CD14-positive monocyte (primary cell): ENCODE measurements at regions of chr1 and their contacts with region 1.

Region 1: GRCh38 chr1:157156058-157156541 is 17.9 kb upstream of the ETV3 start:
- DNase-seq: peak; percentile 70 to 84 (median 77)
- H3K4me3 ChIP-seq: no peak overlapping the region
- H3K4me3 Mint-ChIP-seq: peak overlapping the region; percentile 63 to 78
- H3K27ac ChIP-seq: no peak overlapping the region
- H3K27ac Mint-ChIP-seq: peak overlapping the region; percentile 28 to 91 (median 74)
- H3K4me1 ChIP-seq: peaks cover 23 to 25% of the 10 kb centered on the region in 2 donors
- H3K4me1 Mint-ChIP-seq: peaks cover 27% of the 10 kb centered on the region
- H3K27me3 ChIP-seq: no peaks in the 10 kb centered on the region
- H3K27me3 Mint-ChIP-seq: peaks cover 6 to 19% (median 11%) of the 10 kb centered on the region in 3 donors
- CTCF ChIP-seq: peak; percentile 95

Region 2: GRCh38 chr1:157090196-157090647 is 65.9 kb before region 1 on chr1:
- intact Hi-C with region 1: loop called (anchors 1 kb)
- DNase-seq: peak; percentile 76 to 83 (median 83)
- H3K4me3 ChIP-seq: no peak overlapping the region
- H3K4me3 Mint-ChIP-seq: no peak overlapping the region
- H3K27ac ChIP-seq: no peak overlapping the region
- H3K27ac Mint-ChIP-seq: peak overlapping the region in 1 of 7 donors; percentile 33
- H3K4me1 ChIP-seq: peaks cover 12 to 13% of the 10 kb centered on the region in 2 donors
- H3K4me1 Mint-ChIP-seq: peaks cover 9% of the 10 kb centered on the region
- H3K27me3 ChIP-seq: no peaks in the 10 kb centered on the region
- H3K27me3 Mint-ChIP-seq: peaks cover 2 to 13% (median 3%) of the 10 kb centered on the region in 3 donors
- CTCF ChIP-seq: peak; percentile 93

Region 3: DNA sequence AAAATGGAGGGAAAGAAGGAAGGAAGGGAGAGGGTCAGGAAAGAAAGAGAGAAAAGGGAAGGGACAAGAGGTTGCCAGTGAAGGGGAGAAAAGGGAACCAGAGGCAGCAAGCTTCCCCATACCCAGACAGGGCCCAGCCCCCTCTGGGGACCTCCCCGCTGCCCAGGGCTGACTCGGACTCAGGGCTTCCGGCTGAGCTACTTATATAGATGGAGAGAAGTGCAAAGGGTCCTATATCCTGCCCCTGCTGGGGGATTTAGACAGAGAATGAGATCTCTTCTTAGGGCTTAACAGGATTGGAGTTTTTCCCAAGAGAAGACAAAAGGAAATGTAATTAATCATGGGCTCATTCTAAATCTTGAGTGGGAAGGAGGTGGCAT is 56.5 kb before region 1 on chr1 and contains the start of gene ETV3L:
- intact Hi-C with region 1: loop called in 1 of 2 experiments (anchors 2 kb)
- DNase-seq: peak; percentile 75 to 91 (median 88)
- H3K4me3 ChIP-seq: peak within 1 kb of the TSS in 1 of 3 experiments; percentile 30
- H3K4me3 Mint-ChIP-seq: peak within 1 kb of the TSS in 1 of 2 donors; percentile 61
- H3K27ac ChIP-seq: peak within 1 kb of the TSS; percentile 37 to 72
- H3K27ac Mint-ChIP-seq: peak within 1 kb of the TSS; percentile 10 to 86 (median 78)
- H3K4me1 ChIP-seq: peaks cover 32 to 49% of the 10 kb centered on the region in 2 donors
- H3K4me1 Mint-ChIP-seq: peaks cover 49% of the 10 kb centered on the region
- H3K27me3 ChIP-seq: no peaks in the 10 kb centered on the region
- H3K27me3 Mint-ChIP-seq: peaks cover 0 to 8% (median 5%) of the 10 kb centered on the region in 3 donors
- CTCF ChIP-seq: no peak
- polyA plus RNA-seq, gene ETV3L: 0.26 to 0.41 TPM in 2 of 3 donors, not detected in the other

Region 4: DNA sequence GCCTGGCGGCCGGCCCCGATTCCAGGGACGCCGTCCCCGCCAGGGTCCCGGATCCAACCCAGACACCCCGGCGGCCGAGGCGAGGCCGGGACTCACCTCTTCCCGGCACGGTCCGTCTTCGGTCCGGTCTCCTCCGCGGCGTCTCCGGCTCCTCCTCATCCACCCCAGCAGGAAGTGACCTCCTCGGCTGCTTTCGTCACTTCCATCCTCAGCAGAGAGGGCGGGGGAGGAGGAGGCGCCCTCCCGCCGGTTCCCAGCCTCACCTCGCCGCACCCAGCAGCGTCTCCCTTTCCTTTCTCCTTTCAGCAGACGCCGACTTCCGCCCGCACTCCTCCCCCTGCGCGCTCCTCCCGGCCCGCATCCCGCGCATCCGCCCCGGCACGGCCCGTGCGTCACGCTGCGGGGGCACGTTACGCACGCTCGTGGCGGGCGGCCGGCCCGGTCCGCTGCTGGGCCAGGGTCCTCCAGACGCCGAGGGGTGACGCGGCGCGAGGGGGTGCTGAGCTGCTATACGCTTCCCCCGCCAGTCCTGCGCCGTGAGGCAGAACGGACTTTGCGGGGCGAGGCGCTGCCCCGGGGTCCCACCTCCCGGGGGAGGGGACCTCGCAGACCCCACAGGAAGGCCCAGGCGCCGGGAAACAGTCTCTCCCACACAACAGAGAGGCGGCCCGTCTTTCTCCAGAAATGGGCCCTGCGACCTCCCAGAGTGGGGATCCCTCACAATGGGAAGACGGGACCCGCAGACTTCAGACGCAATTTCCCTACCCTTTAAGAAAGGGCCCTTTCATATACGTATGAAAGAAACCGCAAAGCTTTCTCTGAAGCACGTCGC is 17.7 kb before region 1 on chr1 and contains the start of gene ETV3:
- intact Hi-C with region 1: loop called in 1 of 2 experiments (anchors 2 kb)
- DNase-seq: peak; percentile 86 to 92 (median 91)
- H3K4me3 ChIP-seq: peak within 1 kb of the TSS; percentile 82 to 96 (median 93)
- H3K4me3 Mint-ChIP-seq: peak within 1 kb of the TSS; percentile 98 to 99
- H3K27ac ChIP-seq: peak within 1 kb of the TSS; percentile 91 to 97
- H3K27ac Mint-ChIP-seq: peak within 1 kb of the TSS; percentile 96 to 99 (median 97)
- H3K4me1 ChIP-seq: peaks cover 22 to 23% of the 10 kb centered on the region in 2 donors
- H3K4me1 Mint-ChIP-seq: peaks cover 24% of the 10 kb centered on the region
- H3K27me3 ChIP-seq: no peaks in the 10 kb centered on the region
- H3K27me3 Mint-ChIP-seq: peaks cover 0 to 3% (median 0%) of the 10 kb centered on the region in 3 donors
- CTCF ChIP-seq: no peak
- polyA plus RNA-seq, gene ETV3: 4.8 to 62.3 (median 6.3) TPM